Activated CD4-positive, alpha-beta memory T cell treated with anti-CD3 and anti-CD28 coated beads for 36 hours (primary cell): ENCODE measurements at regions of chr1 and their contacts with region 1.

Region 1: GRCh38 chr1:101520302-101520701 is 283.5 kb downstream of the S1PR1 start:
- DNase-seq: peak; percentile 13
- H3K4me3 Mint-ChIP-seq: no peak overlapping the region
- H3K27ac Mint-ChIP-seq: no peak overlapping the region
- H3K4me1 Mint-ChIP-seq: peaks cover 5% of the 10 kb centered on the region
- H3K27me3 Mint-ChIP-seq: peaks cover 3% of the 10 kb centered on the region

Region 2: DNA sequence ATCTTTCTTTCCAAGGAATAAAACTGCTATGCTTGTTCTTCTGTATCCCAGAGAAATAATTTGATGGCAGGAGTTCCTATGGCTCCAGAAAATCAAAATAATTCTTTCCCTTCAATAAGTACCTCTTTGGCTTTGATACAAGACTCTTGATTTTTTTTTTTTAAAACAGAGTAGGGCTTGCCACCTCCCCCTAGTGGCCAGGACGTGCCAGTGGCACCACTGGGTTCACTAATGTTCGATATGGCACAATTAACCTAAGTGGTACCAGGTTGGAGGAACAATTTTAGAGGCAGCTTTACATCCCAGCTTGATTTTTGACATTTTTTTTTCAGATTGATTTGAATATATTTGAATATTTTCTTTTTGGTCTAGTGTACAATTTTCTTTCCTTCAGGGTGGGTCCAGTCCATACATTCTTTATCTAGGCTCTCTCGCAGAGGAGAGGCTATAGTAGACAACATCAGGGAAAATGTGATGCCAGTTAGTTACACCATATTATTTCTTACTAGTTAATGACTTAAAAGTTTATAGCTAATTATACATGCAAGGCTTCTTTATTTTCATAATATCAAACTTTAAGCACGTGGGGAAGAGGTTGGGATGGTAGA is 47.4 kb after region 1 on chr1:
- CTCF ChIA-PET with region 1: interaction called, 26 read pairs
- POLR2A ChIA-PET with region 1: no interaction called
- intact Hi-C with region 1: loop called (anchors 2 kb)
- DNase-seq: peak; percentile 50
- H3K4me3 Mint-ChIP-seq: no peak overlapping the region
- H3K27ac Mint-ChIP-seq: no peak overlapping the region
- H3K4me1 Mint-ChIP-seq: no peaks in the 10 kb centered on the region
- H3K27me3 Mint-ChIP-seq: peaks cover 2% of the 10 kb centered on the region

Region 3: DNA sequence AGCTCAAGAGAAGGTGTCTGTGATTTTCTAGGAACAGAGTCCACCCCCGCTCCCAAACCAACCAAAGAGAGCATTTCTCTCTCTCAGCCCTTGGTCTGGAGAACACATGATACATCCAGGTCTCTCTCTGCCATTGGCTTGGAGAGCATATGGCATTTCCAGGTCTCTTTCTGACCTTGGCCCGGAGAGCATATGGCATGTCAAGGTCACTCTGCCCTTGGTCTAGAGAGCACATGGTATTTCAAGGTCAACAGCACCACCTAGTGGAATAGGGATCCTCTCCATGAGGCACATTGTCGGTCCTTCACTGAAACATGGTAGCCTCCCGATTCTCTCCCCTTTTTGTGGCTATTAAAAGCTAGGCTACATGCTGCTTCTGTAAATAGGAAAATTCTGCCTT is 914.1 kb after region 1 on chr1:
- CTCF ChIA-PET with region 1: no interaction called
- POLR2A ChIA-PET with region 1: no interaction called
- intact Hi-C with region 1: loop called (anchors 5 kb)
- DNase-seq: no peak
- H3K4me3 Mint-ChIP-seq: no peak overlapping the region
- H3K27ac Mint-ChIP-seq: no peak overlapping the region
- H3K4me1 Mint-ChIP-seq: no peaks in the 10 kb centered on the region
- H3K27me3 Mint-ChIP-seq: no peaks in the 10 kb centered on the region